Activated naive CD4-positive, alpha-beta T cell treated with anti-CD3 and anti-CD28 coated beads for 36 hours (primary cell): ENCODE measurements at regions of chr17 and their contacts with region 1.

Region 1: GRCh38 chr17:28057731-28058279 is 15.3 kb downstream of the NLK start:
- DNase-seq: peak; percentile 14
- H3K4me3 Mint-ChIP-seq: no peak overlapping the region
- H3K27ac Mint-ChIP-seq: peak overlapping the region; percentile 51
- H3K4me1 Mint-ChIP-seq: peaks cover 51% of the 10 kb centered on the region
- H3K27me3 Mint-ChIP-seq: no peaks in the 10 kb centered on the region

Region 2: GRCh38 chr17:28072936-28073533 is 15.2 kb after region 1 on chr17:
- CTCF ChIA-PET with region 1: interaction called, 4 read pairs
- intact Hi-C with region 1: loop called (anchors 1 kb)
- DNase-seq: no peak
- H3K4me3 Mint-ChIP-seq: no peak overlapping the region
- H3K27ac Mint-ChIP-seq: no peak overlapping the region
- H3K4me1 Mint-ChIP-seq: peaks cover 47% of the 10 kb centered on the region
- H3K27me3 Mint-ChIP-seq: no peaks in the 10 kb centered on the region

Region 3: GRCh38 chr17:28078341-28079229 is 20.8 kb after region 1 on chr17:
- CTCF ChIA-PET with region 1: interaction called, 4 read pairs
- intact Hi-C with region 1: loop called (anchors 1 kb)
- DNase-seq: no peak
- H3K4me3 Mint-ChIP-seq: no peak overlapping the region
- H3K27ac Mint-ChIP-seq: no peak overlapping the region
- H3K4me1 Mint-ChIP-seq: peaks cover 42% of the 10 kb centered on the region
- H3K27me3 Mint-ChIP-seq: no peaks in the 10 kb centered on the region

Region 4: GRCh38 chr17:28097901-28098300 is 40.1 kb after region 1 on chr17:
- CTCF ChIA-PET with region 1: no interaction called
- intact Hi-C with region 1: no loop called
- DNase-seq: no peak
- H3K4me3 Mint-ChIP-seq: no peak overlapping the region
- H3K27ac Mint-ChIP-seq: no peak overlapping the region
- H3K4me1 Mint-ChIP-seq: no peaks in the 10 kb centered on the region
- H3K27me3 Mint-ChIP-seq: no peaks in the 10 kb centered on the region

Region 5: DNA sequence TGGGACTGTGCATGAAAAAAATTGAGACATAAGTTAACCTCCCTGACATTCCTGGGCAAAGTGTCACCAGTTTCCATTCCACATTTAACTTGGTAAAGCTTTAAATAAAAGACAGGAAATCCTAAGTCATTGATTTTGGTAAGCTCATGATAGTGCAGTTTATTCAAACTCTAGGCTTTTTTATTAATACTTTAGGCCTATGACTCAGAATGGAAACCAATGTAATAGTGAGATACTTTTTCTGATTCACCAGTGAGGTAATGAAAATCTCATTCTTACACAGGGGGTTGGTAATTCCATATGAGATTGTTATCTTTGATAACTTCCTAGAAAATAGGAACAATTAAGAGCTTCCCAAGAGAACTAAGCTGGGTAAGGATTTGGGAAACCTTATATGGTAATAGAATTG is 75.8 kb after region 1 on chr17:
- CTCF ChIA-PET with region 1: interaction called, 3 read pairs
- intact Hi-C with region 1: loop called (anchors 1 kb)
- DNase-seq: no peak
- H3K4me3 Mint-ChIP-seq: no peak overlapping the region
- H3K27ac Mint-ChIP-seq: no peak overlapping the region
- H3K4me1 Mint-ChIP-seq: peaks cover 10% of the 10 kb centered on the region
- H3K27me3 Mint-ChIP-seq: no peaks in the 10 kb centered on the region

Region 6: GRCh38 chr17:28161311-28161710 is 103.5 kb after region 1 on chr17:
- CTCF ChIA-PET with region 1: no interaction called
- intact Hi-C with region 1: no loop called
- DNase-seq: no peak
- H3K4me3 Mint-ChIP-seq: no peak overlapping the region
- H3K27ac Mint-ChIP-seq: no peak overlapping the region
- H3K4me1 Mint-ChIP-seq: no peaks in the 10 kb centered on the region
- H3K27me3 Mint-ChIP-seq: no peaks in the 10 kb centered on the region